ENCODE measurements at regions of chr19 and their contacts with region 1.

Region 1: GRCh38 chr19:11987405-11988281 is 22.8 kb downstream of the ZNF763 start:
- DNase-seq: peak; percentile 98
- H3K27ac ChIP-seq: peak overlapping the region; percentile 91
- CTCF ChIP-seq: no peak

Region 2: GRCh38 chr19:11798391-11799330 is 189.0 kb before region 1 on chr19 and contains the start of gene ZNF491:
- CTCF ChIA-PET with region 1: interaction called, 28 read pairs
- POLR2A ChIA-PET with region 1: no interaction called
- DNase-seq: peak; percentile 97
- H3K27ac ChIP-seq: peak within 1 kb of the TSS; percentile 67
- CTCF ChIP-seq: 0 out of 2 replicates have a peak, but pooled peaks have one; percentile 20

Region 3: GRCh38 chr19:11924886-11925650 is 62.6 kb before region 1 on chr19 and contains the start of gene ZNF700:
- CTCF ChIA-PET with region 1: interaction called, 14 read pairs
- POLR2A ChIA-PET with region 1: no interaction called
- DNase-seq: peak; percentile 96
- H3K27ac ChIP-seq: peak within 1 kb of the TSS; percentile 95
- CTCF ChIP-seq: no peak